ENCODE measurements at regions of chr2 and their contacts with region 1.

Region 1: DNA sequence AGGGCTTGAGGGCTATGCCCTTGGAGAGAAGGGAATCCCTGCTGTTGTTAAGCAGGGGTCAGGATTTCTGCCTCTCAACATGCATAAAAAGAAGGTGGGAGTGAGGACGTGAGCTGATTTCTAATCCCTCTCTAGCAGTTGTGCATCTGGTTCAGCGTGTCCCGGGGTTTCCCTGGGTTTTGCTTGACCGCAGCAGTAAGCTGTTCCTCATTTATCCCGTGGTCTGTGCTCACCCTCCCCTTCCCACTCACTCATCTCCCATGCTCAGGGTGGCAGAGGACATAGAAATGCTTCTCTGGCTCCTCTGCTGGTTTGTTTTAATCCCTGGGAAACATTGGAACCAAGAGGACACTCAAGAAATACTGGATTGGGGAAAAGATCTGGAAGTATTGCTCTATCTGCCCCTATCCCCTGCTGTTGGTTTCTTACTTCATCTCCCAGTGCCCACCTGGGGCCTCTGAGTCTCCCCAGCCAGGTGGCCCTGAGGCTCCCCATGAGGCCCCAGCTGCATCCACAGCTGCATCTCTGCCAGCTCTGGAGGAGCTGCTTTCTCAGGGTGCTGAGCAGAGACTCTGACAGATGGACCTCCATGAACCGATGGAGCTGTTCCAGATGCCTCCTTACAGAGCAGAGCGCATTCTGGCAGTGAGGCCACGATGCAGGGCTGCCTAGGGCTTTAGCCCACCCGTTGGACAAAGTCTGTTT is 36.1 kb downstream of the TET3 start:
- DNase-seq: peak; percentile 51 to 88 (median 86)
- H3K4me3 ChIP-seq: peak overlapping the region in 1 of 7 experiments; percentile 17
- H3K27ac ChIP-seq: no peak overlapping the region
- H3K4me1 ChIP-seq: peaks cover 0 to 45% (median 28%) of the 10 kb centered on the region in 4 experiments
- H3K27me3 ChIP-seq: no peaks in the 10 kb centered on the region

Region 2: DNA sequence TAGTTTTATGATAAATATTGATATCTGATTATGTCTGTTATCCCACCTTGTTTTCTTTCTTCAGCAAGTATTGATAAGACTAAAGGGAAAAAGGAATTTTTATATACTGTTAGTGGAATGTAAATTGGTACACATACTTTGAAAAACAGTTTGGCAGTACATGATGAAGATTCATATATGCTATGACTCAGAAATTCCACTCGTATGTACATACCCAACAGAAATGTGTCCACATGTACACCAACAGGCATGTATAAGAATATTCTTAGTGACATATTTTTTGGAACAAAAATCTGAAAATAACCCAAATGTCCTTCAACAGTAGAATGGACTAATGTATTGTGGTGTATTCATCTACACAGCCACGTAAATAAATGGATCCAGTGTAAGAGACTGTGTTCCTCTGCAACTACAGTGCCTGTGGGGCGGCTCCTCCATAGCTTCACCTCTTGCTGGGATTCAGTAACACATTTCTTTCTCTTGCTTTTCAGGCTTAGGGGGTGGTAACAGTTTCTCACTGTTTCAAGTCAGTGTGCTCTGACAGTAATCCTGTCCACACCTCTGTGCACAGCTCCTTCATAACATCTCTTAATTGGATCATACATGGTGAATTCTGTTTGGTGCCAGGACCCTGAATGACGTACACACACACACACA is 670.7 kb before region 1 on chr2:
- CTCF ChIA-PET with region 1: no interaction called
- POLR2A ChIA-PET with region 1: no interaction called
- DNase-seq: no peak
- H3K4me3 ChIP-seq: no peak overlapping the region
- H3K27ac ChIP-seq: no peak overlapping the region
- H3K4me1 ChIP-seq: no peaks in the 10 kb centered on the region
- H3K27me3 ChIP-seq: peaks cover 0 to 17% (median 0%) of the 10 kb centered on the region in 5 experiments

Region 3: DNA sequence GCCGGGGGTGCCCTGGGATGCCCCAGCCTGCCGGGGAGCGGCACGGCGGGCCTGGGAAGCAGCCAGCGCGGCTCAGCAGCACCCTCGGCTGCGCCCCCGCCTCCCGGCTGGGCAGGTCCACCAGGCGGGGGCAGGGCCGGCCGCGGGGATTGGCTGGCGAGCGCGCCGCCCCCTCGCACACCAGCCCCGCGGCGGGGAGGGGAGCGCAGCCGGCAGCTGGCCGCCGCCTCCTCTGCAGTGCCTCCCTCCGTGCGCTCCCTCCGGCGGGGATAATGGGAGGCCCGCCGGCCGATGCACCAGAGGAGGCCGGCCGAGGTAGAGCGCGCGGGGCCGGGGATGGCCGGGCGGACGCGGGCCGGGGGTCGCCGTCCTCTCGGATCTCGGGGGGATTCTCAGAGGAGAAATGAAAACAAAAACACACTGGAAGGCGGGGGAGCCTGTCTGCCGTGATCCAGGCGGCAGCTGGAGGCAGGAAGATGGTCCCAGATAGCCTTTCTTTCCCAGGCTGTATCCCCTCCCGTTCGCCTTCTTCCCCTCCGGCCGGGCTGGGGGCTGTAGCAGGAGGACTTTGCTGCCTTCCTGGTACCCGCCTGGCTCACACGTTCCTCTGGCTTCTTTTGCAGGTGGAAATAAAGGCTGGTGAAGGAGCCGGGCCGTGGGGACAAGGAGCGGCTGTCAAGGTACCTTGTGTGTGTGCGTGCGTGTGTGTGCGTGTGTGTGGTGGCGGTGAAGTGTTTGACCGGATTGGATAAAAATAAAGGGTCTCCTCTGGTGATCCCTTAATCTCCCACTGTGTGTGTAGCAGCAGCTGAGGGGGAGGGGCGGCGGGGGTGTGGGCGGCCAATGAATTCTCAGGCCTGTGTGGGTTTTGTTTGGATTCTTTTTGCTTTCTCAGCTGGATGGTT is 18.1 kb before region 1 on chr2:
- CTCF ChIA-PET with region 1: interaction called, 14 read pairs
- POLR2A ChIA-PET with region 1: no interaction called
- DNase-seq: peak; percentile 69 to 85 (median 77)
- H3K4me3 ChIP-seq: peak overlapping the region; percentile 44 to 85 (median 65)
- H3K27ac ChIP-seq: no peak overlapping the region
- H3K4me1 ChIP-seq: peaks cover 0 to 26% (median 18%) of the 10 kb centered on the region in 4 experiments
- H3K27me3 ChIP-seq: no peaks in the 10 kb centered on the region

Region 4: GRCh38 chr2:74010087-74010661 is 10.7 kb before region 1 on chr2:
- CTCF ChIA-PET with region 1: interaction called, 15 read pairs
- POLR2A ChIA-PET with region 1: no interaction called
- DNase-seq: no peak
- H3K4me3 ChIP-seq: no peak overlapping the region
- H3K27ac ChIP-seq: peak overlapping the region in 1 of 2 experiments; percentile 1
- H3K4me1 ChIP-seq: no peaks in the 10 kb centered on the region
- H3K27me3 ChIP-seq: no peaks in the 10 kb centered on the region

Region 5: GRCh38 chr2:74031221-74031620 is 10.4 kb after region 1 on chr2:
- CTCF ChIA-PET with region 1: interaction called, 12 read pairs
- POLR2A ChIA-PET with region 1: interaction called, 12 read pairs
- DNase-seq: peak in 2 of 3 donors; percentile 53 to 66
- H3K4me3 ChIP-seq: peak overlapping the region in 2 of 7 experiments; percentile 63 to 72
- H3K27ac ChIP-seq: peak overlapping the region; percentile 29 to 78
- H3K4me1 ChIP-seq: peaks cover 42 to 77% (median 67%) of the 10 kb centered on the region in 4 experiments
- H3K27me3 ChIP-seq: no peaks in the 10 kb centered on the region

Region 6: GRCh38 chr2:74037379-74037860 is 16.6 kb after region 1 on chr2:
- CTCF ChIA-PET with region 1: interaction called, 4 read pairs
- POLR2A ChIA-PET with region 1: interaction called, 12 read pairs
- DNase-seq: peak; percentile 80 to 94 (median 91)
- H3K4me3 ChIP-seq: peak overlapping the region in 5 of 7 experiments; percentile 13 to 61 (median 40)
- H3K27ac ChIP-seq: peak overlapping the region; percentile 52 to 73
- H3K4me1 ChIP-seq: peaks cover 50 to 90% (median 77%) of the 10 kb centered on the region in 4 experiments
- H3K27me3 ChIP-seq: no peaks in the 10 kb centered on the region